Activated T-helper 1 cell treated with anti-CD3 and anti-CD28 coated beads, Interleukin-12 subunit alpha, Interleukin-12 subunit beta, Interleukin-2, Interleukin-4 antibody, amounts not matched to agents 30 ng/mL and 10 ng/mL and 1 ng/mL, durations not matched to agents 14 hours and 24 hours and 36 hours (primary cell): ENCODE measurements at regions of chr3 and their contacts with region 1.

Region 1: DNA sequence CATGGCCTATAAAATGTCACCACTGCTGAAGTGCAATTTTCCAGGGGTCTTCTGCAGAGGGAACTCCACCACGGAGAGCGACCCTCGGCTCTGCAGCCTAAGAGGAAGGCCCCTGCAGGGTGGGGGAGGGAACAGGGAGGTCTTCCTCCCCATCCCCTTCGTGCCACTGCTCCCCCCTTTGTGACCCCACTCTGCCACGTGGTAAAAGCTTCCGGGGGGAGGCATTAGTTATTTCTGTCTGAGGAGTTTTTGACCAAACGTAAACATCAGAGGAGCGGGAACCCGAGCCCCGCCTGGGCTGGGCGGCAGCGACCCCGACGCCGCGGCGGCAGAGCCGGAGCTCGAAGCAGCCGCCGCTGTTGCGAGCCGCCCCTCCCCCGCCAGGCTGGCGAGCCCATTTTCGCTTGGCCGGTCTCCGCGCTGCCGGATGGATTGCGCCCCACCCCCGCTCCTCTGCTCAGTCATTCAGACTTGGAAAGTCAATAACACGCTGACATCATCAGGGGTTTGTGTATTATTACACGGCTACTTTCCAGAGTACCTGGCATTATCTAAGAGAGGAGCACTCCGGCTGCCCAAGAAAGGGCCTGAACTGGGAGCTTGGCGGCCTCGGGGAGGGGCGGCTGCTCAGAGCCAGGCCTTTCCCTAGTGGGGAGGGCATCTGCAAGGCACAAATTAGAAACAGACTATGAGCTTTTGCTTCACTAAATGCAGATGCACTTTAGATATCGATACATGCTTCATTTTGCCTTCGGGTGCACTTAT is 162.5 kb upstream of the TBL1XR1 start:
- DNase-seq: peak; percentile 93
- H3K4me3 Mint-ChIP-seq: peak overlapping the region; percentile 80
- H3K27ac Mint-ChIP-seq: peak overlapping the region; percentile 97
- H3K4me1 Mint-ChIP-seq: peaks cover 48% of the 10 kb centered on the region
- H3K27me3 Mint-ChIP-seq: no peaks in the 10 kb centered on the region

Region 2: DNA sequence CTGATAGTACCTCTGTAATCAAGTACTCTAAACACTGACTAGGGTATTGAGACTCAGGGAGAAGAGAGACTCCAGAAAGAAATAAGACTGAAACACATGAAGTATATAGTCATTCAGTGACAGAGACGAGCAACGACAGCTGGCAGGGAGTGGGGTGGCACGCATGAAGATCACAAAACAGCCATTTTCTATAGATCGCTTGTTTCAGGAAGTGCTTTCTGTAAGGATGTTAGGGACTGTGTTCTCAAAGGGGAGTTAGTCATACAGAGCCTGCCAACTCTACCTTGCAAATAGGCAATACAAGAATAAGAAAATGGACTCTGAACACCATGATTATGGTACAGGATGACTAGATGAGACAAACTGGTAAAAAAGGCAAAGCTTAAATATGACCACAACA is 302.0 kb before region 1 on chr3:
- intact Hi-C with region 1: loop called (anchors 1 kb)
- DNase-seq: peak; percentile 10
- H3K4me3 Mint-ChIP-seq: no peak overlapping the region
- H3K27ac Mint-ChIP-seq: no peak overlapping the region
- H3K4me1 Mint-ChIP-seq: peaks cover 7% of the 10 kb centered on the region
- H3K27me3 Mint-ChIP-seq: no peaks in the 10 kb centered on the region

Region 3: DNA sequence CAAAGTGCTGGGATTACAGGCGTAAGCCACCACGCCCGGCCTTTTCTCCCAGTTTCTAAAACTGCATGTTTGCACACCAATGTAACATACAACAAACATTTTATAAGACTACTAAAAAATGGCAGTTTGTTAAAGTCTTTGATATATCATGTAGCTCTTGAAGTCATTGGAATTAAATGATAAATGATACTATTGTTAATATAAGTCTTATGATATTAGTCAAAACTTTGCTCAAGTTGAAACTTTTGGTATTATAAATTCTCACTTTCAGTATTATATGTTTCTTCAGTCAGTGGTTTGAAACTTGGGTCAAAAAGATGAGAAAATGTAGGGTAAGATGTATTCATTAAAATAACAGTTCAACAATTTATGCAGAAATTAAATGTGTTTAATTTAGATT is 44.9 kb before region 1 on chr3:
- intact Hi-C with region 1: loop called (anchors 1 kb)
- DNase-seq: no peak
- H3K4me3 Mint-ChIP-seq: no peak overlapping the region
- H3K27ac Mint-ChIP-seq: no peak overlapping the region
- H3K4me1 Mint-ChIP-seq: peaks cover 15% of the 10 kb centered on the region
- H3K27me3 Mint-ChIP-seq: peaks cover 3% of the 10 kb centered on the region

Region 4: DNA sequence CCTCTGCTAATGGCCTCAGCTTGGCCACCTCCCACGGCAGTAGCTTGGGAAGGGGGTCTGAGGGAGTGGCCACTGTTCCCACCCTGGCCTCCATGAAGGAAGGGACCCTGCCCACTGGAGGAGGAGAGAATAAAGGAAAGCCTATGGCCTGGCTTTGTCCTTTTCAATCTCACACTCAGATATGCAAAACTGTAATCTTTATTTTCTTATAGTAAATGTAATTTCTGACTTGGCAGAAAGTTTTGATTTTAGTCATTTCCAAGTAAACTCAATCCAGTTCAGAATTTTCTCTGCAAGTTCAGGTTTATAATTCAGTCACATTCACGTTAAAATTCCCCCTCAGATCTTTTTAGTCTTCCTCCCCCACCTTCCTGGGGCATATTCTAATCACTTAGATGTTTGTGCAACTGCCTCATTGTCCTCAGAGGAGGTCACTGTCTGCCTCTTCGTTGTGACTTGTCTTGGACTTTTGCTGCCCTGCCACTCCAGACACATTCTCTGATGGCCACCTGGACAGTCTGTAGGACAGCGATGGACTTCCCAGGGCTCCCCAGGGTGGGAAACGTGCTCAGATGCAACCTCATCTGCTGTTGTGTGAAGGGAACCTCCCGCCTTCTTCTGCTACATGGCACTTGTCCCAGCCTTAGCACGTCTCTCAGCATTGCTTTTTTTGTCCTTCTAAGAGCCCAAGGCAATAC is 60.3 kb after region 1 on chr3:
- intact Hi-C with region 1: loop called (anchors 1 kb)
- DNase-seq: no peak
- H3K4me3 Mint-ChIP-seq: peak overlapping the region; percentile 19
- H3K27ac Mint-ChIP-seq: peak overlapping the region; percentile 53
- H3K4me1 Mint-ChIP-seq: peaks cover 26% of the 10 kb centered on the region
- H3K27me3 Mint-ChIP-seq: peaks cover 1% of the 10 kb centered on the region

Region 5: DNA sequence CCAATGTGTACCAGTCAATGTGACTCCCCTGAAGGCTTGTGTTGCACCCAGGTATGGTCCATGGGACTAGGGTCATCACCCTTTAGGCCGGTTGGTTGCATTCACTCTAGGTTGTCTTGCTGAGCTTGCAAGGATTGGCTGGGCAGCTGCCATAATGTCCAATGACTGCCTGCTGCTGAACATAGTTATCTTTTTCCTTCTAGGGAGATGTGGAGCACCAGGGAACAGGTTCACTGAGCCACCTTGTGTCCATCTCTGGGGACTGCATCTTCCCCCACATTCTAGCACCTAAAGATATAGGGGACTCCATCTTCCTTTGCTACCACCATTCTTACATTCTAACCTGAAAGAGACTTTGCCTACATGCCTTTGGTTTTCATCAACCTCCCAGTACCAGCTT is 417.9 kb after region 1 on chr3:
- intact Hi-C with region 1: loop called (anchors 1 kb)
- DNase-seq: no peak
- H3K4me3 Mint-ChIP-seq: no peak overlapping the region
- H3K27ac Mint-ChIP-seq: no peak overlapping the region
- H3K4me1 Mint-ChIP-seq: peaks cover 14% of the 10 kb centered on the region
- H3K27me3 Mint-ChIP-seq: no peaks in the 10 kb centered on the region

Region 6: DNA sequence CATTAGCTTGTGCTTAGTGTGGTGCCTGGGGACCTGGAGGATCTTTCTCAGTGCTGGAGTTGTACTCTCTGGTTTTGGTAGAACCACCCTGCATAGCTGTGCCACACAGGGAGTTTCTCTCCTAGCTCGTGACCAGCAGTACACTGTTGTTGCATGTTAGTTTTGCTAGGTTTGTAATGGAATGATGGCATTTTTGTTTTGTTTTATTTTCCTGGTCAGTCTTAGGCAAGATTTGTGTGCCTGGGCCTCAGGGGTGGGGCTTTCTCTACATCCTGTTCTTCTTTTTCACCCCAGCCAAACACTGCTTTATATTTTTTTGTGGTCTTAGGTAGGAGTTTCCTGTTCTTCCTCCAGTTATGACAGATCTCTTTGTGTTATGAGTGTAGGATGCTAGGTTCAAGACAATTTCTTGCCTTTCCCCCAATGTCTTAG is 641.9 kb after region 1 on chr3:
- intact Hi-C with region 1: loop called (anchors 1 kb)
- DNase-seq: peak; percentile 21
- H3K4me3 Mint-ChIP-seq: peak overlapping the region; percentile 47
- H3K27ac Mint-ChIP-seq: peak overlapping the region; percentile 82
- H3K4me1 Mint-ChIP-seq: peaks cover 34% of the 10 kb centered on the region
- H3K27me3 Mint-ChIP-seq: no peaks in the 10 kb centered on the region